ENCODE measurements at regions of chr3 and their contacts with region 1.

Region 1: DNA sequence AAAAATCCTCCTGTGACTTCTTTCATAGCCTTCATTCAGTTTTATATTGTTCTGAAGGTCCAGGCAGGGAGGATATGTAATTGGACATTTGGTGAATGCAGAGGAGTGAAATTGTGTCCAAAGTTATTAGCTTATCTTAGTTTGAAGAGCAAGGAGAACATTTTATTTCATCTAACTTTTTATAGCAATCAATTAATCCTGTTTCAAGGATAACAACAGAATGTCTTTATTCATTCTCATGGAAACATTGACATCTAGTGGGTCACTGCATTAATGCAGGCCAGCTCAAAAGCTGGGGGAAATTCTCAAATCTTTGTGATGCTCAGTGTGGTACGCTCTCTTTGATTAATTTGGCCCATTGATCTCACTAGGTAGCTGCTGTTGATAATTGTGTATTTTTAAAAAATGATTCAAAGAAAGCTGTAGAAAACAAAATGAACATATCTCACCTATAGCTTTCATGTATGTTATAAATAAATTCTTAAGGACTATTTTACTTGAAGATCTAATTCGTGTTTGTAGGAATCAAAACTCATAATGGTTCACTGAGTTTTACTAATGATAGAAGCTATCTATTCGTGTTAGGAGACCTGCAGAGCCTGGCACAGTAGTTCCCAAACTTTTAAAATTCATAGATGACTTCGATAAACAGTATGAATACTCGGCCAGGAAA is 150.8 kb upstream of the KCNMB2 start:
- DNase-seq: peak in 1 of 2 experiments; percentile 46
- H3K4me3 ChIP-seq: no peak overlapping the region
- H3K4me3 Mint-ChIP-seq: no peak overlapping the region
- H3K27ac Mint-ChIP-seq: no peak overlapping the region
- H3K4me1 ChIP-seq: peaks cover 26% of the 10 kb centered on the region
- H3K4me1 Mint-ChIP-seq: peaks cover 8% of the 10 kb centered on the region
- H3K27me3 ChIP-seq: no peaks in the 10 kb centered on the region
- H3K27me3 Mint-ChIP-seq: no peaks in the 10 kb centered on the region
- CTCF ChIP-seq: peak; percentile 57 to 72

Region 2: GRCh38 chr3:176939022-176939817 is 1446.2 kb before region 1 on chr3:
- CTCF ChIA-PET with region 1: no interaction called
- POLR2A ChIA-PET with region 1: no interaction called
- intact Hi-C with region 1: loop called (anchors 10 kb)
- DNase-seq: peak; percentile 41 to 68
- H3K4me3 ChIP-seq: no peak overlapping the region
- H3K4me3 Mint-ChIP-seq: no peak overlapping the region
- H3K27ac Mint-ChIP-seq: no peak overlapping the region
- H3K4me1 ChIP-seq: no peaks in the 10 kb centered on the region
- H3K4me1 Mint-ChIP-seq: no peaks in the 10 kb centered on the region
- H3K27me3 ChIP-seq: no peaks in the 10 kb centered on the region
- H3K27me3 Mint-ChIP-seq: no peaks in the 10 kb centered on the region
- CTCF ChIP-seq: peak; percentile 58 to 75

Region 3: DNA sequence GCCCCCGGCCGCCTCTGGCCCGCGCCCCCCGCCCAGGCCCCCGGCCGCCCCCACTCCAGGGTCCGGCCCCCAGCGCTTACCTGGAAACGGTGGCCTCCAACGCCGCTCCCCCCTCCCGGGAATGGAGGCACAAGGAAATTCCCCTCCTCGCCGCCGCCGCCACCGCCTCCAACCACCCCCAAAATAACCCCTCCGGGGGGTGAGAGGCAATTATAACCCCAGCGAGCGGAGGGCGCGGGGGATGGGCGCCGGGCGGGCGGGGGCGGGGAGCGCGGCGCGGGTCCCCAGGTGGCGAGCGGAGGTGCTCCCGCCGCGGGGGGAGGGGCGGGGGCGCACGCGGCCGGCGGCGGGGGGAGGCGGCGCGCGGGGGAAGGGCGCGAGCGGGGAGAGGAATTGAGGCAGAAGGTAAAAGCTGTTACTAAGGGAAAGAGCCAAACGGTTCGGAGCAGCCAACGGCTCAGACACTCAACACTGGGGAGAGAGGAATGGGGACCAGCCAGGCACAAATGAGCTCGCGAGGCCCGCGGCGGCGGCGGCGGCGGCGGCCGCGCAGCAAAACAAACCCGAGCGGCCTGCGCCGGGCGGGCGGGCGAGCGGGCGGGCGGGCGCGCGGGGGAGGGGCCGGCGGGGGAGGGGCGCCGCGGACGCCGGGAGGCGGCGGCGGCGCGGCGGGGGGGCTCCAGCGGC is 1188.2 kb before region 1 on chr3 and contains the start of gene TBL1XR1:
- CTCF ChIA-PET with region 1: no interaction called
- POLR2A ChIA-PET with region 1: no interaction called
- intact Hi-C with region 1: loop called (anchors 10 kb)
- DNase-seq: peak; percentile 90 to 92
- H3K4me3 ChIP-seq: peak within 1 kb of the TSS; percentile 70
- H3K4me3 Mint-ChIP-seq: peak within 1 kb of the TSS; percentile 95
- H3K27ac Mint-ChIP-seq: peak within 1 kb of the TSS; percentile 95
- H3K4me1 ChIP-seq: peaks cover 18% of the 10 kb centered on the region
- H3K4me1 Mint-ChIP-seq: peaks cover 17% of the 10 kb centered on the region
- H3K27me3 ChIP-seq: no peaks in the 10 kb centered on the region
- H3K27me3 Mint-ChIP-seq: no peaks in the 10 kb centered on the region
- CTCF ChIP-seq: no peak
- total RNA-seq, gene TBL1XR1: 127 and 140 TPM in 2 replicates

Region 4: DNA sequence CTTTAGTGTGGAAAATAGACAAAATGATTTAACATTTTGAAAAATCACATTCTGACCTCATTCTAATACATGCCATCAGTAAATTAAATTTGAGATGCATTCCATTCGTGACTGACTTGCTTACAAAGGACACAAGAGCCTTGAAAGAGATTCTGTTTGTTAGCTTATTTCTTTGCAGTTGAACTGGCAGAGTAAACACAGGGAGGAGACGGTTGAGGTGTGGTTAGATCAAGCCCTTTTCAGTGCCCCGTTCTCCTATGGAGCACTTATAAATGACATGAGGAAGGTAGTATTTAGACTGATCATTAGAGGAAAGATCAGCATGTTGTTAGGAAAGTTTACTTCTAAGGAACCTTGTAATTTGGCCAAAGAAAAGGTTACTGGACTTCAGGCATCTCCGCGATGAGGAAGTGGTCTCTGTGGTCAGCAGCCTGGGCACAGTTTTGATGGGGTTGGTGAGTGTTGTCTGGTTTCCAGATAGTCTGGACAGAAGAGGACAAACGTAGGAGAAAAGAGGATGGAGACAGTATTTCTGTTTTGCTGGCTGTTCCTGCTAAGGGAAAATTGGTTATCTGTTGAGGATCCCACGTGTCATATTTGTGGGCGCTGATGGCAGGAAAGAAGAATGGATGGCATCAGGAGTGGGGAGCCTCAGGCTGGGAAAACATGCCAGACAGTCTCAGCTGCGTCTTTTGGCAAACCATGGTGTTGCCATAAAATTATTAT is 859.3 kb before region 1 on chr3:
- CTCF ChIA-PET with region 1: no interaction called
- POLR2A ChIA-PET with region 1: no interaction called
- intact Hi-C with region 1: loop called (anchors 1 kb)
- DNase-seq: no peak
- H3K4me3 ChIP-seq: no peak overlapping the region
- H3K4me3 Mint-ChIP-seq: no peak overlapping the region
- H3K27ac Mint-ChIP-seq: no peak overlapping the region
- H3K4me1 ChIP-seq: peaks cover 20% of the 10 kb centered on the region; the same call in 1 of the 2 replicates
- H3K4me1 Mint-ChIP-seq: peaks cover 8% of the 10 kb centered on the region
- H3K27me3 ChIP-seq: no peaks in the 10 kb centered on the region
- H3K27me3 Mint-ChIP-seq: no peaks in the 10 kb centered on the region
- CTCF ChIP-seq: no peak

Region 5: DNA sequence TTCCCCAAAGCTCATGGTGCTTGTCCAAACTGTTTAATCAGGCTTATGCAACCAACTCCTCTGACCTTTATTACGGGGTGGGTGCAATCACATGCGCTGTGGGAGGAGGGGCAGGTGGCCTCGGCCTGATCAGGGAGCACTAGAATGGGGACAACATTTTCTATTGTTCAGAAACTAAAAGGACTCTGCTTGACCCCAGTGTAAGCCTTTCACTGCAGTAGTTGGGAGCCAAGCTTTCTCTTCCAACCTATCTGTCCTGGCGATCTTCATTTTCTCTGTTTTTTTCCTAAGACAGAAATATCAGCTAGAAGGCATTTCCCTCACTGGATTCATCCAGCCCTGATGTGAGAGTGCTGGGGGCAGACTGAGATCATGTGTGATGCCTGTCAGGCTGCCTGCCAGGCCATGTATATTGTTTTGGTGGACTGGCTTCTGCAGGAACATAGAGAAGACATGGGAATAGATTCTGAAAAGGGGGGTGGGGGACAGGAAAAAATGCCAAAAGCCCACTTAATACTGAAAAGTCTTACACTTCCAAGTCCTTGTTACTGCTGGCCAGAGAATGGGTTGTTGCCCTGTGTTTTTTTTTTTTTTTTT is 561.1 kb before region 1 on chr3:
- CTCF ChIA-PET with region 1: no interaction called
- POLR2A ChIA-PET with region 1: no interaction called
- intact Hi-C with region 1: loop called (anchors 10 kb)
- DNase-seq: peak; percentile 66 to 80
- H3K4me3 ChIP-seq: no peak overlapping the region
- H3K4me3 Mint-ChIP-seq: no peak overlapping the region
- H3K27ac Mint-ChIP-seq: peak overlapping the region; percentile 77
- H3K4me1 ChIP-seq: peaks cover 38% of the 10 kb centered on the region
- H3K4me1 Mint-ChIP-seq: peaks cover 24% of the 10 kb centered on the region
- H3K27me3 ChIP-seq: no peaks in the 10 kb centered on the region
- H3K27me3 Mint-ChIP-seq: no peaks in the 10 kb centered on the region
- CTCF ChIP-seq: no peak

Region 6: DNA sequence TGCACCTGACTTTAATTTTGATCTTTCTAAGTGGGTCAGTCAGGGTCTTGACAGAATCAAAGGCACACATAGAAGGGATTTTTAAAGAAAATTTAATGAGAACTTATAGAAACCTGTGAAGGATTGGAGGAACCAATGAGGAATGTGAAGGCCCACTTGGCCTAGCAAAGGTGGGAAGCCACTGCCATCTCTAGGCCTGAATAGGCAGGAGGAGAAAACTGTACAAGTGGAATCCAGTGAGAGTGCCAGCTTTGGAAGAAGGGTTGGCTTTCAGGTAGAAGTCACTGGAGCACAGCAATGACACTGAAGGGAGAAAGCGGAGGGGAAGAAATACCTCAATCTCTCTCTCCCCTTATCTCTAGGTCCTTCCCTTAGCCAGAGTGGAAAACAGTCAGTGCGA is 229.9 kb before region 1 on chr3:
- CTCF ChIA-PET with region 1: no interaction called
- POLR2A ChIA-PET with region 1: no interaction called
- intact Hi-C with region 1: loop called (anchors 10 kb)
- DNase-seq: peak in 1 of 2 experiments; percentile 35
- H3K4me3 ChIP-seq: no peak overlapping the region
- H3K4me3 Mint-ChIP-seq: no peak overlapping the region
- H3K27ac Mint-ChIP-seq: no peak overlapping the region
- H3K4me1 ChIP-seq: no peaks in the 10 kb centered on the region
- H3K4me1 Mint-ChIP-seq: no peaks in the 10 kb centered on the region
- H3K27me3 ChIP-seq: no peaks in the 10 kb centered on the region
- H3K27me3 Mint-ChIP-seq: no peaks in the 10 kb centered on the region
- CTCF ChIP-seq: peak in 1 of 2 experiments; percentile 21

Measured in Caco-2 (cell line).